Activated B cell treated with CpG ODN at 0.5 μM for 24 hours (primary cell): ENCODE measurements at regions of chr2 and their contacts with region 1.

Region 1: GRCh38 chr2:68789603-68790002 is 55.0 kb downstream of the ARHGAP25 start:
- DNase-seq: peak; percentile 75
- ATAC-seq: peak; percentile 87
- H3K4me3 Mint-ChIP-seq: peak overlapping the region; percentile 61
- H3K27ac Mint-ChIP-seq: no peak overlapping the region
- H3K4me1 Mint-ChIP-seq: peaks cover 47% of the 10 kb centered on the region
- H3K27me3 Mint-ChIP-seq: no peaks in the 10 kb centered on the region
- CTCF ChIP-seq: no peak

Region 2: DNA sequence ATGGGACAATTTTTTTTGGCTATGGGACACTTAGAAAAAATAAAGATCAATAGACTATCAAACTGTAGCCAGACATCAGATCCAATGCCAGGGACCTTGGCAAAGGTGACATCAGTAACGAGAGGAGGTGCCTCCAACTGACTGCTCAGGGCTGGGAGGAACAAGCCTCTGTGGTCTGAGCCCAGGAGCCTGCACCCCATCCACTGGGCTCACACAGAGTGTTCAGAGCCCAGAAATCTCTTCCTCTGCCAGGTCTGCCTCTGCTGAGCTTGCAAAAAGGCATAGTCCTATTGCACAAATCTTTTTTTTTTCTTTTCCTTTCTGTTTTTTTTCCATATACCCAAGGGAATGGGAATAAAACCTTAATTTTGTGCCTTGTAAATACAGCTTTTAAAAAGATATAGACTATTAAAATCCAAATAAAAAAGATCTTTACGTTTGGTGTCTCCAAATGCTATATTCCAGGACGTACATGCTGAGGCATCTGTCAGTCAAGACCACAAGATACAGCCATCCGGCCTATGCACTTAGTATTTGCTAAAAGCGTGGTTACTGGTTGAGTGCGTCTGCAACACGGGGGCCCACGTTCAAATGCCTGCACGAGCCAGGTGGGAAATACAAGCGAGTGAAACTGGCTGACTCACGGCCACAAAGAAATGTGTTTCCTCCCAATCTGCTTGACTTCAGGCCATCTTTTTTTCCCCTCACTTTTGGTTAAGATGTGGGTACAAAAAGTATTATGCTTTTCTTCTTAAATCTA is 62.8 kb before region 1 on chr2:
- CTCF ChIA-PET with region 1: no interaction called
- POLR2A ChIA-PET with region 1: interaction called, 6 read pairs
- intact Hi-C with region 1: loop called (anchors 1 kb)
- DNase-seq: peak; percentile 52
- ATAC-seq: peak; percentile 95
- H3K4me3 Mint-ChIP-seq: peak overlapping the region; percentile 29
- H3K27ac Mint-ChIP-seq: peak overlapping the region; percentile 78
- H3K4me1 Mint-ChIP-seq: peaks cover 49% of the 10 kb centered on the region
- H3K27me3 Mint-ChIP-seq: no peaks in the 10 kb centered on the region
- CTCF ChIP-seq: no peak

Region 3: GRCh38 chr2:68766376-68766845 is 23.2 kb before region 1 on chr2:
- CTCF ChIA-PET with region 1: interaction called, 10 read pairs
- POLR2A ChIA-PET with region 1: interaction called, 1,418 read pairs
- intact Hi-C with region 1: loop called (anchors 1 kb)
- DNase-seq: no peak
- ATAC-seq: peak; percentile 41
- H3K4me3 Mint-ChIP-seq: peak overlapping the region; percentile 67
- H3K27ac Mint-ChIP-seq: peak overlapping the region; percentile 96
- H3K4me1 Mint-ChIP-seq: peaks cover 98% of the 10 kb centered on the region
- H3K27me3 Mint-ChIP-seq: no peaks in the 10 kb centered on the region
- CTCF ChIP-seq: no peak

Region 4: GRCh38 chr2:68925295-68925896 is 135.8 kb after region 1 on chr2:
- CTCF ChIA-PET with region 1: no interaction called
- POLR2A ChIA-PET with region 1: no interaction called
- intact Hi-C with region 1: no loop called
- DNase-seq: no peak
- ATAC-seq: peak; percentile 83
- H3K4me3 Mint-ChIP-seq: no peak overlapping the region
- H3K27ac Mint-ChIP-seq: no peak overlapping the region
- H3K4me1 Mint-ChIP-seq: peaks cover 3% of the 10 kb centered on the region
- H3K27me3 Mint-ChIP-seq: no peaks in the 10 kb centered on the region
- CTCF ChIP-seq: no peak